Activated CD8-positive, alpha-beta memory T cell treated with anti-CD3 and anti-CD28 coated beads, Interleukin-2, amount 10 ng/mL, durations not matched to agents 7 days and 5 days (primary cell): ENCODE measurements at regions of chr15 and their contacts with region 1.

Region 1: GRCh38 chr15:64731012-64731806 is 44.2 kb downstream of the RBPMS2 start:
- DNase-seq: peak; percentile 88
- ATAC-seq: peak; percentile 85
- H3K4me3 Mint-ChIP-seq: no peak overlapping the region
- H3K27ac Mint-ChIP-seq: no peak overlapping the region
- H3K4me1 Mint-ChIP-seq: peaks cover 6% of the 10 kb centered on the region
- H3K27me3 Mint-ChIP-seq: no peaks in the 10 kb centered on the region

Region 2: DNA sequence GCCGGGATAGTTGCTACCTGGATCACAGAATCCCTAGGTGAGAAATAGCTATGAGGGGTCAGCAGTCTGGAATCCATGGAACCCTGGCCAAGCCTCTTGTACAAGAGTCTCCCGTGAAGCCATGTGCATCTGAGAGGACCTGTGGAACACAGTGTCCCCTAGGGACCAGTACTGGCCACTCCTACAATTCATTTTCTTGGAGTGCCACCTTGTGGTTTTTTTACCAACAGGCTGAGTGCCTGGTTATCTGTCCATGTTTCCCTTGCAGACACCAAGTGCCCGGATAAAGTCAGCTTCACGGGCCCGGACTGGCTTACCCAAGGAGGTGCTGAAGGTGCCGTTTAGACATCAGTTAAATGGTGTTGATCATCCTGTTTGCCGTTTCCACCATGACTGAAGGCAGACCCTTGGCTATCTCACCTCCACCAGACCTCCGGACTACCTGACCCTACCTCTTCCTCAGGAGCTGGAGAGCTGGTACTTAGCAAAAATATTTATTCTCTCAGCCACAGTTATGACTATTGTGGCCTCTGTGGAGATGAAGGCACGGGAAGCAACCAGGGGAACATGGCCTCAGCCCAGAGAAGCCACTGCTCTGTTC is 49.7 kb before region 1 on chr15:
- CTCF ChIA-PET with region 1: interaction called, 111 read pairs
- DNase-seq: no peak
- ATAC-seq: peak; percentile 12
- H3K4me3 Mint-ChIP-seq: no peak overlapping the region
- H3K27ac Mint-ChIP-seq: no peak overlapping the region
- H3K4me1 Mint-ChIP-seq: no peaks in the 10 kb centered on the region
- H3K27me3 Mint-ChIP-seq: no peaks in the 10 kb centered on the region

Region 3: GRCh38 chr15:64693134-64693533 is 38.1 kb before region 1 on chr15:
- CTCF ChIA-PET with region 1: interaction called, 111 read pairs
- DNase-seq: no peak
- ATAC-seq: no peak
- H3K4me3 Mint-ChIP-seq: no peak overlapping the region
- H3K27ac Mint-ChIP-seq: no peak overlapping the region
- H3K4me1 Mint-ChIP-seq: peaks cover 6% of the 10 kb centered on the region
- H3K27me3 Mint-ChIP-seq: no peaks in the 10 kb centered on the region

Region 4: GRCh38 chr15:64717735-64718495 is 13.3 kb before region 1 on chr15:
- CTCF ChIA-PET with region 1: interaction called, 23 read pairs
- DNase-seq: no peak
- ATAC-seq: no peak
- H3K4me3 Mint-ChIP-seq: no peak overlapping the region
- H3K27ac Mint-ChIP-seq: no peak overlapping the region
- H3K4me1 Mint-ChIP-seq: no peaks in the 10 kb centered on the region
- H3K27me3 Mint-ChIP-seq: no peaks in the 10 kb centered on the region

Region 5: DNA sequence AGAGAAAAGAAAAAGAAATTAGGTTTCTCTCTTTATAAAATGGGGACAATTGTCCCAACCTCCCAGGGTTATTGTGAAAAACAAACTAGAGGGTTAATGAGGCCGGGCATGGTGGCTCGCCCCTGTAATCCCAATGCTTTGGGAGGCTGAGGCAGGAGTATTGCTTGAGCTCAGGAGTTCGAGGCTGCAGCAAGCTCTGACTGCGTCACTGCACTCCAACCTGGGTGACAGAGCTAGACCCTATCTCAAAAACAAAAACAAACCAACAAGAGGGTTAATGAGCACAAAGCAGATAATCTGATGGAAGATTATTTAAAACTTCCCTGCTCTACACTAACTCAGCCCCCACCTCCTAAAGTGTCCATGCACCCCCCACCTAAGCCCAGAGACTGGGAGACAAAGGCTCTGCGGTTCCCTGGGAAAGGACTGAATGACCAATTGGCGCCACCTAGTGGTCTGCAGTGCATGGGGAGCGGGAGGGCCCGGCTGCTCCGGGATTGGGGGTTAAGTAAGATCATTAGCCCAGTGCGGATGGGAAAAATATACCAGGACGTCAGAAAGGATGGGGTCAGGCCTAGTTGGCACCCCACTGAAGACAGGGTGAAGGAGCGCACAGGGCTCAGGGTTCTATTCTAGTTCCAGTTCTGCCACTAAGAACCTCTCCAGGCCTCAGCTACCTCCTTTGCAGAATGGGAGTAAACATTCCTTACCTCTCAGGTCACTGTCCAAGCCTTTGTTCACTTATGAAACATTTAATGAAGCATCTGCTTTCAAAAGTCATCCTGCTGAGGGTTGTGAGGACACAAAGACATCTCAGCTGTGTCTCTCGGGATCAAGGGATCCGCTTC is 78.7 kb after region 1 on chr15:
- CTCF ChIA-PET with region 1: interaction called, 66 read pairs
- DNase-seq: peak; percentile 83
- ATAC-seq: peak; percentile 79
- H3K4me3 Mint-ChIP-seq: no peak overlapping the region
- H3K27ac Mint-ChIP-seq: no peak overlapping the region
- H3K4me1 Mint-ChIP-seq: peaks cover 2% of the 10 kb centered on the region
- H3K27me3 Mint-ChIP-seq: peaks cover 3% of the 10 kb centered on the region

Region 6: GRCh38 chr15:64905119-64905831 is 174.1 kb after region 1 on chr15:
- CTCF ChIA-PET with region 1: interaction called, 17 read pairs
- DNase-seq: peak; percentile 86
- ATAC-seq: peak; percentile 87
- H3K4me3 Mint-ChIP-seq: peak overlapping the region; percentile 66
- H3K27ac Mint-ChIP-seq: peak overlapping the region; percentile 56
- H3K4me1 Mint-ChIP-seq: peaks cover 39% of the 10 kb centered on the region
- H3K27me3 Mint-ChIP-seq: peaks cover 7% of the 10 kb centered on the region